ENCODE measurements at regions of chr2 and their contacts with region 1.

Region 1: GRCh38 chr2:16617282-16618261 is 48.1 kb downstream of the CYRIA start:
- DNase-seq: no peak
- ATAC-seq: peak in 5 of 8 donors; percentile 16 to 36 (median 21)
- H3K4me3 ChIP-seq: no peak overlapping the region
- H3K27ac ChIP-seq: peak overlapping the region in 4 of 10 donors; percentile 18 to 71 (median 39)
- H3K4me1 ChIP-seq: peaks cover 0 to 72% (median 35%) of the 10 kb centered on the region in 9 donors
- H3K27me3 ChIP-seq: no peaks in the 10 kb centered on the region
- CTCF ChIP-seq: peak in 8 of 9 donors; percentile 8 to 60 (median 52)

Region 2: DNA sequence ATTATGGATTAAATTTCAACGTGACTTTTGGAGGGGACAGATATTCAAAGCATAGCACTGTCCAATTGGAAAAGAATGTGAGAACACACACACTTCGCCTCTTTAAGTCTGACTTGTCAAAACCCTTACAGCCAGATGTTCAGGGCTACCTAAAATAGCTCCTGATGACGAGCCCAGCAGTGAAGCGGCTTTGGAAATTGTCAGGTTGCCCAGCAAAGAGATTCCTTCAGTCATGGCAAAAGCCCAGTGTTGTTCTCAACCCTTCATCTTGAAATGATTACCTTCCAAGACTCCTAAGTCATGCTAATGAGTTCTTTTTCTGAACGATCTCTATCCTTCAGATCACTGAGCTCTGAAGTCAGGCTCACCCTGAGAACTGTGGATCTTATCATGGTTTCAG is 1548.4 kb before region 1 on chr2:
- intact Hi-C with region 1: loop called in 1 of 10 experiments (anchors 5 kb)
- DNase-seq: peak in 1 of 2 donors; percentile 11
- ATAC-seq: peak in 5 of 8 donors; percentile 33 to 85 (median 58)
- H3K4me3 ChIP-seq: no peak overlapping the region
- H3K27ac ChIP-seq: no peak overlapping the region
- H3K4me1 ChIP-seq: no peaks in the 10 kb centered on the region
- H3K27me3 ChIP-seq: no peaks in the 10 kb centered on the region
- CTCF ChIP-seq: no peak

Region 3: DNA sequence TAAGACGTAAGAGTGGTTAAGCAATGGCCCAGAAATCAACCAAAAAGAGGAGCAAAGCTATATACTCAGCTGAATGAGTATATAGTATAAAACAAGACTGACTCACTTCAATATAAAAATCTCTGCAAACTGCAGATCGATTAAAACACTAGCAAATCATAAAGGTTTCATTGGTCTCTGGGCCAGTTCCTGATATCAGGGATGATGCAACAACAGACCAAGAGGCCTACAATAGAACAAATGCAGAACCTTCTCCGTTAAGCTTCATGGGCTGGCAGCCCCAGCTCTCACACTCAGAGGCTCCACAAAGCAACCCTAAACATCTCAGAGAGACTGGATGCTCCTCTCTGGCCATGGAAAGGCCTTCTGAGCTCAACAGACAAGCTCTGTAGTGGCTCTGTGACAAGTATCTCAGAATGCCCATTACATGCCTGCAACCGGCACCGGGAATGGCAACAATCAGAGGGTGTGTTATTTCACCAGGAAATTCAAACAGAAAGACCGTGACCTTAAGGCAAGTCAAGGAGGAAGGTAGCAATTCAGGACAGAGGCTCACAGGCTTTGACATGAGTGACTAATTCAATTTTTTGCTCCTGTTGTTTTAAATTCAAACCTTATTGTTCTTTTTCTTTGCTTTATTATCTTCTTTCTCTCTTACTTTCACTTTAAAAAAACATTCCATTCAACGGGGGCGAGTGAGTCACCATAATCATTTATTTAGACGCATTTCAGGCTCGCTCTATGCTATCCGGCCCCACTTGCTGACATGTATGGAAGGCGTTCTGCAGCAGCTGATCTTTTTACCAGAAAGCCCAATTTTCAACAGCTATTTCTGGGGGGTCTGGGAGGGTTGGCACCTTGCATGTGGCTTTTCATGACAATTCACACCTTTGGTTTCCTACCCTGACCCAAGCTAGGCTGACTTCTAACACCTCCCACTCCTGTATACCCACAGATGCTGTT is 33.0 kb after region 1 on chr2:
- intact Hi-C with region 1: loop called in 2 of 10 experiments (anchors 5 kb)
- DNase-seq: no peak
- ATAC-seq: peak in 4 of 8 donors; percentile 18 to 46 (median 21)
- H3K4me3 ChIP-seq: peak overlapping the region in 6 of 10 donors; percentile 17 to 37 (median 34)
- H3K27ac ChIP-seq: peak overlapping the region in 6 of 10 donors; percentile 11 to 87 (median 69)
- H3K4me1 ChIP-seq: peaks cover 7 to 69% (median 52%) of the 10 kb centered on the region in 9 donors
- H3K27me3 ChIP-seq: no peaks in the 10 kb centered on the region
- CTCF ChIP-seq: no peak

Region 4: GRCh38 chr2:16656784-16657391 is 39.3 kb after region 1 on chr2:
- intact Hi-C with region 1: loop called in 2 of 10 experiments (anchors 5 kb)
- DNase-seq: no peak
- ATAC-seq: peak; percentile 23 to 77 (median 52)
- H3K4me3 ChIP-seq: no peak overlapping the region
- H3K27ac ChIP-seq: peak overlapping the region in 8 of 10 donors; percentile 26 to 87 (median 58)
- H3K4me1 ChIP-seq: peaks cover 10 to 91% (median 68%) of the 10 kb centered on the region in 9 donors
- H3K27me3 ChIP-seq: no peaks in the 10 kb centered on the region
- CTCF ChIP-seq: no peak

Region 5: GRCh38 chr2:16728351-16729136 is 111.0 kb after region 1 on chr2:
- intact Hi-C with region 1: no loop called
- DNase-seq: no peak
- ATAC-seq: no peak
- H3K4me3 ChIP-seq: no peak overlapping the region
- H3K27ac ChIP-seq: no peak overlapping the region
- H3K4me1 ChIP-seq: peaks cover 0 to 6% (median 0%) of the 10 kb centered on the region in 9 donors
- H3K27me3 ChIP-seq: peaks cover 0 to 8% (median 0%) of the 10 kb centered on the region in 7 donors
- CTCF ChIP-seq: no peak

Measured in heart right ventricle (tissue), 16 donors.